ENCODE measurements at regions of chr1 and their contacts with region 1.

Region 1: DNA sequence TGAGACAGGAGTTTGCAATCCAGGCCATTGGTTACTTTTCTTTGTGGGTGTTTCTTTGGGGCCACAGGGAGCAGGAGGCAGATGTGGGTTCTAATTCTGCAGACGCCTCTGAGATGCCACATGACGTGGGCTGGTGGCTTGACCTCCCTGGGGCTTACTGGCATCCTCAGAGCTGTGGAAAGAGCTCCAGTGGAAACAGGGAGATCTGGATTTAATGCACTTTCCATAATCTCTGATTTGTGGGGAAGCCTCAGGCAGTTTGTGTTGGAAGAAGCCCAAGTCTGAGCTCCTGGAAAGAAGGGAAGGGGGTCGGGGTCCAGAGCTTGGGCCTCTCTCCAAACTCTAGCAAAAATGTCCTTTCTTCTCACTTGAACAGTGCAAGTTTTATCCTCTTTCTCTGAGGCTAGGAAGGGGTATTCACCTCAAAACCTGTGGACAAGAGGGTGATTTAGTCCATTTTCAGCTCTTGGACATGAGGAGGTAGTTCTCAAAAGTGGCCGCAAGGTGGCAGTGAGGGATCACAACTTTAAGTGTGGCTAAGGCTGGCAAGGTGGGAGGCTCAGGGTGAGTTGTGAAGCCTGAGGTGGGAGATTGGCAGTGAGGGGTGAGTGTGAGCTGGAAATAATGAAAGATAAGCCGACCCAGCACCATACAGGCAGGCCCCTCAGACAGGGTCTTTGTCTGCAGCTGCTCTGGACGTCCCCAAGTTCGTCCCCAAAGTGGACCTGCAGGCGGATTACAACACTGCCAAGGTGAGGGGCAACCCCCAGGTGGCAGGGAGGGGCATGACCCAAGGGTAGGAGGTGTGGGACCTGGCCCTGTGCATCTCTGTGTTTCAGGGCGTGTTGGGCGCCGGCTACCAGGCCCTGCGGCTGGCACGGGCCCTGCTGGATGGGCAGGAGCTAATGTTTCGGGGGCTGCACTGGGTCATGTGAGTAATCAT is 9.2 kb downstream of the IKBKE start:
- DNase-seq: peak; percentile 74
- H3K4me3 ChIP-seq: no peak overlapping the region
- H3K27ac ChIP-seq: no peak overlapping the region
- H3K4me1 ChIP-seq: no peaks in the 10 kb centered on the region
- H3K27me3 ChIP-seq: no peaks in the 10 kb centered on the region
- CTCF ChIP-seq: peak; percentile 76 to 77
- POLR2A ChIP-seq: no peak

Region 2: DNA sequence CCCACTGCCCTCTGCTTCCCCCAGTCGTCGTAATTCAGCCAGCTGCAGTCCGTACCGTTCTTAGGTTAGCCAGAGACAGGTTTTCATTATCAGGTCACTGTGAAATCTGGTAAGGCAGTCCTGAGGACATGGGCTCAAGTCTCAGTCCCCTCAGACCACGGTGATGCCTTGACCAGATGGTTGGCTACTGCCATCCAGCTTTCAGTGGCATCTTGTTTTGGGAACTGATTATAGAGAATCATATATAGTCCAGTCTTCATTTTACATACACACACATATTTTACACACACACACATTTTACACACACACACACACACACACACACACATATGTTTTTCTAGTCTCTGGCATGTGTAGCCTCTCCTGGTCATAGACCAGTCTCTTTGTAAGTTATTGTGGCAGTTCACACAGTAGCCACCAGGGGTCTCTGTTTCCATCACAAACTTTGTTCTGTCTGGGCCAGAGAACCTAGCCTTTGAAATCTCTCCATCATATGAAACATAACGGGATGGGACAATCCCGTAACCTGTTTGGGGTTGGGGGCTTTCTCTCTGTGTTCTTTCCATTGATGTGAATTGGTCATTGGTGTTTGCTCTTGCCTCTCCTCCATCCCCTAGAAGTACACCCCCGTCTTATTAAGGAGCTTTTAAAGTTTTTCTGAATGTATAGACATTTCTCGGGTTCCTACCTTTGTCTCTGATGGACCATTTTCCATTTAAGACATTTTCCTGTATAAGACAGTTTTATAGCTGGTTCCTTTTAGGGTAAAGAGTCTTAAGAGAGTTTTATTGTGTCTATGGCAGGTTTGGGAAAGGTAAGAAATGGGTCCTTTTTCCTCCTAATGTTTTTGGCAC is 17.6 kb before region 1 on chr1:
- CTCF ChIA-PET with region 1: interaction called, 27 read pairs
- POLR2A ChIA-PET with region 1: no interaction called
- dilution Hi-C with region 1: no loop called
- intact Hi-C with region 1: no loop called
- DNase-seq: peak; percentile 79
- H3K4me3 ChIP-seq: no peak overlapping the region
- H3K27ac ChIP-seq: no peak overlapping the region
- H3K4me1 ChIP-seq: peaks cover 20% of the 10 kb centered on the region
- H3K27me3 ChIP-seq: peaks cover 0 to 1% of the 10 kb centered on the region in 2 experiments
- CTCF ChIP-seq: peak; percentile 76 to 86
- POLR2A ChIP-seq: no peak

Region 3: DNA sequence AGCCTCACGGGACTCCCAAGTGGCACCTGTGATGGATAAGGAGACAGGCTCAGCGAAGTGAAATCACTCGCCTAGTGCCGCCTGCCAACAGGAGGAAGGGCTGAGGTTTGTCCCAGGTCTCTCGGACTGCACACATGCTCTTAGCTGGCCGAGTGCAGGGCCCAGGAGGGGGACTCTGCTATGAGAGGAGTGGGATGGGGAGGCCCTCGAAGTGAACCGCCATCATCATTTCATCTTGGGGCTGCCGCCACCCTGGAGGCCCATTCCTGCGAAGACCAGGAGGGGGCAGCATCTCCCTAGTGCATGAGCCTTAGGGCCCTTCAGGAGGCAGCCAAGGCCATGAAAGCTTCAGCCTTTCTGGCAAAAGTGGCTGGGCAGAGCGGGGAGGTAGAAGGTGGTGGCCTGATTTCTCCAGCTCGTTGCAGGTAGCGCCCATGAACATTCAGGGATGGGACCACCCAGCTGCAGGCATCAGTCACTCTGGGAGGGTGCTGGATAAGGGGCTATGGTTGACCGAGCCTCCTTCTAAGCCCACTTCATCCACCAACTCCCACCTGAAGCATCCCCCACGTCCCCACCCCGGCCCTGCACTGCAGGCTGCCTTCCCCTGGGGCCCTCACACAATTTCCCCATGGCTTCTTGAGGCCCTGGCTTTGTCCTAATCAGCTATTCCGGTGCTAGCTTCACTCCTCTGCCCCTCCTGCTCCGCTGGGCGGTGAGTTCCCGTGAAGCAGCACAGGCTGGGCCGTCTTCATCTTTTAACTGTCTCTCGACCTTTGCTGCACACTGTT is 10.7 kb after region 1 on chr1:
- CTCF ChIA-PET with region 1: interaction called, 22 read pairs
- POLR2A ChIA-PET with region 1: no interaction called
- dilution Hi-C with region 1: no loop called
- intact Hi-C with region 1: no loop called
- DNase-seq: peak; percentile 59
- H3K4me3 ChIP-seq: no peak overlapping the region
- H3K27ac ChIP-seq: no peak overlapping the region
- H3K4me1 ChIP-seq: peaks cover 8% of the 10 kb centered on the region
- H3K27me3 ChIP-seq: no peaks in the 10 kb centered on the region
- CTCF ChIP-seq: peak; percentile 83 to 92
- POLR2A ChIP-seq: no peak

Region 4: DNA sequence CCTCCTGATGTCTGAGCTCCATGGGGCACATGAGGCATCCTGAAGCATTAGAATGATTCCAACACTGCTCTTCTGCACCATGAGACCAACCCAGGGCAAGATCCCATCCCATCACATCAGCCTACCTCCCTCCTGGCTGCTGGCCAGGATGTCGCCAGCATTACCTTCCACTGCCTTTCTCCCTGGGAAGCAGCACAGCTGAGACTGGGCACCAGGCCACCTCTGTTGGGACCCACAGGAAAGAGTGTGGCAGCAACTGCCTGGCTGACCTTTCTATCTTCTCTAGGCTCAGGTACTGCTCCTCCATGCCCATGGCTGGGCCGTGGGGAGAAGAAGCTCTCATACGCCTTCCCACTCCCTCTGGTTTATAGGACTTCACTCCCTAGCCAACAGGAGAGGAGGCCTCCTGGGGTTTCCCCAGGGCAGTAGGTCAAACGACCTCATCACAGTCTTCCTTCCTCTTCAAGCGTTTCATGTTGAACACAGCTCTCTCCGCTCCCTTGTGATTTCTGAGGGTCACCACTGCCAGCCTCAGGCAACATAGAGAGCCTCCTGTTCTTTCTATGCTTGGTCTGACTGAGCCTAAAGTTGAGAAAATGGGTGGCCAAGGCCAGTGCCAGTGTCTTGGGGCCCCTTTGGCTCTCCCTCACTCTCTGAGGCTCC is 16.8 kb after region 1 on chr1:
- CTCF ChIA-PET with region 1: interaction called, 22 read pairs
- POLR2A ChIA-PET with region 1: no interaction called
- dilution Hi-C with region 1: no loop called
- intact Hi-C with region 1: no loop called
- DNase-seq: no peak
- H3K4me3 ChIP-seq: no peak overlapping the region
- H3K27ac ChIP-seq: no peak overlapping the region
- H3K4me1 ChIP-seq: peaks cover 2% of the 10 kb centered on the region
- H3K27me3 ChIP-seq: no peaks in the 10 kb centered on the region
- CTCF ChIP-seq: no peak
- POLR2A ChIP-seq: no peak

Region 5: GRCh38 chr1:206507284-206508129 is 28.1 kb after region 1 on chr1 and contains the start of gene RASSF5:
- CTCF ChIA-PET with region 1: interaction called, 18 read pairs
- POLR2A ChIA-PET with region 1: no interaction called
- dilution Hi-C with region 1: no loop called
- intact Hi-C with region 1: no loop called
- DNase-seq: peak; percentile 29
- H3K4me3 ChIP-seq: peak within 1 kb of the TSS in 1 of 3 experiments; percentile 27
- H3K27ac ChIP-seq: no peak within 1 kb of the TSS
- H3K4me1 ChIP-seq: no peaks in the 10 kb centered on the region
- H3K27me3 ChIP-seq: peaks cover 65 to 75% of the 10 kb centered on the region in 2 experiments
- CTCF ChIP-seq: no peak
- POLR2A ChIP-seq: no peak
- total RNA-seq, gene RASSF5: 0.44 and 0.60 TPM in 2 replicates

Region 6: DNA sequence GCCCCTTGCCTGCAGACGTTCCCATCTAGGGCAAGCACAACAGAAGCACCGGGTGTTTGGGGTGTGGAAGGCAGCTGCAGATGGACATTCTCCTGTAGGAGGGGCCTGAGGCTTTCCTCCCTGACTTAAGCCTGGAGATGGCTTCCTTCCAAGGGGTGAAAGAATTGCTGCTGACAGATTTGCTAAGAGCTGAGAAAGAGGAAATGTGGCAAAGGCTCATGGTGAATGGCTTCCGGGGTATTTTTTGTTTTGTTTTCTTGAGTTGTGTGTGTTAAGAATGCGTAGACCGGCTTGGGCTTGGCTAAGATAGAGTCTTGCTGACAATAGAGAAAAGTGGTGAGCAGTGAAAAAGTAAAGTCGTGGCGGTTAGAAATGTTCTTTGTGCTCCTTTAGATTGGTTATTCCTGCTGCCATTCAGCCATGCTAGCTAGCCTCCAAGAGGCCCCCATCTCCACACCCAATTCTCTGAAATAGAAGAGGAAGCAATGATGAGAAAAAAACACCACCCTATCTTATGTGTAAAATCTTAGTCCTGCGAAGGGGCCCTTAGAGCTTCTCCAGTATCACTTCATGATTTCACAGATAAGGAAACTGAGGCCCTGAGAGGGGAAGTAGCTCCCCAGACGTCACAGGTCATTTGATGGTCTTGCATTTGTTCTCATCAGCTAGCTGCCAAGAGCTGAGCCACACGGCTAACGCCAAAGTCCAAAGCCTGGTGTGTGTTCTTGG is 95.9 kb after region 1 on chr1:
- CTCF ChIA-PET with region 1: interaction called, 11 read pairs
- POLR2A ChIA-PET with region 1: no interaction called
- dilution Hi-C with region 1: no loop called
- intact Hi-C with region 1: no loop called
- DNase-seq: peak; percentile 91
- H3K4me3 ChIP-seq: no peak overlapping the region
- H3K27ac ChIP-seq: peak overlapping the region; percentile 46
- H3K4me1 ChIP-seq: peaks cover 26% of the 10 kb centered on the region
- H3K27me3 ChIP-seq: no peaks in the 10 kb centered on the region
- CTCF ChIP-seq: no peak
- POLR2A ChIP-seq: no peak